CD8-positive, alpha-beta T cell (primary cell): ENCODE measurements at regions of chr2 and their contacts with region 1.

Region 1: GRCh38 chr2:70029814-70030409 is 57.4 kb upstream of the PCBP1 start:
- DNase-seq: peak in 1 of 9 experiments; percentile 17
- ATAC-seq: no peak
- H3K4me3 ChIP-seq: no peak overlapping the region
- H3K4me3 Mint-ChIP-seq: no peak overlapping the region
- H3K27ac ChIP-seq: no peak overlapping the region
- H3K27ac Mint-ChIP-seq: no peak overlapping the region
- H3K4me1 ChIP-seq: no peaks in the 10 kb centered on the region
- H3K4me1 Mint-ChIP-seq: peaks cover 3% of the 10 kb centered on the region
- H3K27me3 ChIP-seq: no peaks in the 10 kb centered on the region
- H3K27me3 Mint-ChIP-seq: no peaks in the 10 kb centered on the region
- CTCF ChIP-seq: no peak

Region 2: DNA sequence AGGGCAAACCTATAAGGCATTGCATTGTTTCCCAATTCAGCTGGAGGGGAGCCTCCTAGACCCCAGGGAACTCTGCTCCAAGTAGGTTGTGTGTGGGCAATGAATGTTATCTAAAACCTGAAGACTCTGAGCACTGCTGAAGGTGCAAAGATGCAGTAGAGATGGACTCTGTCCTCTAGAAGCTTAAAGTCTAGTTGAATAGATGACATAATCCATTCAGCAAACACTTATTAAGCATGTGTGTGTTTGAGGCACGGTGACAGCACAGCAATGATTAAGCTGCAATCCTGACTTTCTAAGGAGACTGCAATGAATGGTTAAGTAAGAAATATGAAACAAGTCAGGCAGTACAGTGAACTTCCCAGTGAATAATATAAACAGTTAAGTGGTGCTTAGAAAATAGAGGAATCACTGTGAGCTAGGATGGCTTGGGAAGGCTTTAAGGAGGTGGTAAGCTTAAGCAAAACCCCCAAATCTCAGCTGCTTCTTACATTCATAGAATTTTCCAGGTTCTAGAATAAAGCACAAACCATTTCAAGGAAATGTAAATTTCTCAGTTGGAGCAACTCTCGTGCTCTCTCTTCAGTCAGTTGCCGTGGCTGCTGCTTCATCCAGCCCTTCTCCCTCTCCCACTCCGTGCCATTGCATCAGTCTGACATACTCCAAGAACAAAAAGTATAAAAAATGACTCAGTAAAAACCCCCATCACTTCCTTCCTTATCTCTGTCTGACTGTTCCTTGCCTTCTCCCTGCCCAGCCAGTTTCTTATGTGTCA is 95.9 kb before region 1 on chr2:
- CTCF ChIA-PET with region 1: no interaction called
- POLR2A ChIA-PET with region 1: no interaction called
- intact Hi-C with region 1: loop called in 1 of 2 experiments (anchors 5 kb)
- DNase-seq: no peak
- ATAC-seq: no peak
- H3K4me3 ChIP-seq: no peak overlapping the region
- H3K4me3 Mint-ChIP-seq: no peak overlapping the region
- H3K27ac ChIP-seq: no peak overlapping the region
- H3K27ac Mint-ChIP-seq: no peak overlapping the region
- H3K4me1 ChIP-seq: peaks cover 6% of the 10 kb centered on the region
- H3K4me1 Mint-ChIP-seq: peaks cover 26% of the 10 kb centered on the region
- H3K27me3 ChIP-seq: no peaks in the 10 kb centered on the region
- H3K27me3 Mint-ChIP-seq: no peaks in the 10 kb centered on the region
- CTCF ChIP-seq: no peak